Common myeloid progenitor, CD34-positive (primary cell): ENCODE measurements at regions of chr1 and their contacts with region 1.

Region 1: GRCh38 chr1:116139592-116140134 is 28.5 kb downstream of the MAB21L3 start:
- DNase-seq: no peak
- H3K4me3 ChIP-seq: no peak overlapping the region
- H3K27ac ChIP-seq: no peak overlapping the region
- H3K4me1 ChIP-seq: peaks cover 0 to 2% (median 0%) of the 10 kb centered on the region in 4 experiments
- H3K27me3 ChIP-seq: no peaks in the 10 kb centered on the region

Region 2: GRCh38 chr1:116104667-116105205 is 34.9 kb before region 1 on chr1:
- CTCF ChIA-PET with region 1: no interaction called
- POLR2A ChIA-PET with region 1: no interaction called
- DNase-seq: no peak
- H3K4me3 ChIP-seq: no peak overlapping the region
- H3K27ac ChIP-seq: no peak overlapping the region
- H3K4me1 ChIP-seq: no peaks in the 10 kb centered on the region
- H3K27me3 ChIP-seq: no peaks in the 10 kb centered on the region

Region 3: DNA sequence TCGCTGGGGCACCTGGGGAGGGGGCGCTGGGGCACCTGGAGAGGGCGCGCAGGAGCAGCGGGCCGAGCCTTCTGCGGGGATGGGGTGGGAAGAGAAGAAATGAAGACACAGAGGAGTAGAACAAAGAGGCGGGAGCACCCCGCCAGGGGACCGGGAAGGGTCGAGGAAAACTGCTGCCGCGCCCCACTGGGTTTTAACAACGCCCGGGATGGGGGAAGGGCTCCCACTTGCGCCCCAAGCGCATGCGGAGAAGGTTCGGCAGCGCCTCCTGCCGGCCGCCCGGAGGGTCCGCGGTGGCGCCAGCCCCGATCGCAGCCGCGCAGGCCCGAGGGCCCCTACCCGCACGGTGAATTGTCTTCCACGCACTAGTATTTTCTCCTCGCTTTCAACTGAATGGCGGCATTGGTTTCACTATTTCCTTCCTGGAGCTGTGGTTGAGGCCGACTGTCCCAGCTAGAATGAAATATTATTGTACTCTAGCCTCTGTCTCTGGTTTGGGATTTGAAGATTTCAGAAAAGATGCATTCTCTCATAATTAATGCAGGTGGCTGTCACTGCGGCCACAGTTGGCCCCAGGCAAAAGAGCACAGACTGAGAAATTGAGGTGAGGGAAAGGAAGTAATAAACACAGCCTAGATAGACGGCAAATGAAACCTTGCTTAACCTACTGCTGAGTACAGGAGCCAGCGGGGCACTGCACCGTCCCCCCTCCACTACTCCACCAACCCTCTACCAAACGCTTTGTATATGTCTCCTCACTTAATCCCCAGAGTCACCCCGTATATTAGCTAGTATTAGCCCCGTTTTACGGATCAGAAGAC is 28.8 kb after region 1 on chr1:
- CTCF ChIA-PET with region 1: interaction called, 10 read pairs
- POLR2A ChIA-PET with region 1: no interaction called
- DNase-seq: peak; percentile 80 to 89 (median 89)
- H3K4me3 ChIP-seq: peak overlapping the region; percentile 37 to 85 (median 66)
- H3K27ac ChIP-seq: no peak overlapping the region
- H3K4me1 ChIP-seq: peaks cover 6 to 36% (median 22%) of the 10 kb centered on the region in 4 experiments
- H3K27me3 ChIP-seq: no peaks in the 10 kb centered on the region

Region 4: DNA sequence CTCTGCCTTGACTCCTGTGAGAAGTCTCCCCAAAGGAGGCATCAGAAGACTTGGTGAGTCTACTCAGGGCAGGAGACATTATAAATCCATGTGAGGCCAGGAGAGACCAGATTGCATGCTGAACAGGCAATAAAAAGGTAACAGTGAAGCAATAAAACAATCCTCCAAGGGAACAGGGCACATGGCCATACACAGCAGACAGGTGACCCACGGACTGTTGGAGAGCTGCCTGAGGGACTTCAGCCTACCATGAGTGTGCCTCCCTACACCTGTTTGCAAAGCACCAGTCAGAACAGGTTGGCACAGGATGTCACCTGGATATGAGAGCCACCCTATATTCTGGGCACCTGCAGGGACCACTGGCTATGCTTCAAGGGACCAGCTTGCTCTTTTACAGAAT is 39.2 kb after region 1 on chr1:
- CTCF ChIA-PET with region 1: no interaction called
- POLR2A ChIA-PET with region 1: no interaction called
- DNase-seq: no peak
- H3K4me3 ChIP-seq: no peak overlapping the region
- H3K27ac ChIP-seq: no peak overlapping the region
- H3K4me1 ChIP-seq: no peaks in the 10 kb centered on the region
- H3K27me3 ChIP-seq: no peaks in the 10 kb centered on the region

Region 5: GRCh38 chr1:116498789-116499628 is 359.3 kb after region 1 on chr1:
- CTCF ChIA-PET with region 1: interaction called, 140 read pairs
- POLR2A ChIA-PET with region 1: interaction called, 3 read pairs
- DNase-seq: peak; percentile 63 to 68 (median 66)
- H3K4me3 ChIP-seq: no peak overlapping the region
- H3K27ac ChIP-seq: no peak overlapping the region
- H3K4me1 ChIP-seq: peaks cover 9 to 53% (median 29%) of the 10 kb centered on the region in 4 experiments
- H3K27me3 ChIP-seq: no peaks in the 10 kb centered on the region